ENCODE measurements at regions of chr5 and their contacts with region 1.

Region 1: DNA sequence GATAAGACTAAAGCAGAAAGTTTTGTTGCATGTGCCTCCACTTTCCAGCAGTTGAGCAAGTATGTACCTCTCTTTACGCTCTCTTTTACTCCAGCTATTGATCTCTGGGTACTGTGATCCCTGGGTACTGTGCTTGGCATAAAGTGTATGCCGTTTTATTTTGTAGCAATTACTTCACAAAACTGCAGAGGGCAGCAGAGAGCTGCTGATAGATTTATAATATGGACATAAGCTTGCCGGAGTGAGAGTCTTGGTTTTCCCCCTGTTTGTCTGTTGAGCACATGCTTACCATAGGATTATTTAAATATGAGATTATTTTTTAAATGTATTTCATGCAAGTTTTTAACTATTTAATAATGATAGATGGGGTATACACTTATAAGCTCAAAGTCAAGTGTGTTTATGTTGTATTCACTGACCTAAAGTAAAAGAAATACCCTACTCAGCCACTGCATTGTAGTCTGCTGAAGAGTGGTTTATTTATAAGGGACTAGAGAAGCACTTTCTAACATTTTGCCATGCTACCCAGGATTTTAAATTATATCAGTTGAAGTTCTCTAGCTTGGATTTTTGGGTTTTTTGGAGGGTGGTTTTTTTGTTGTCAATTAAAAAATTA is 13.0 kb downstream of the TTC1 start:
- DNase-seq: peak in 32 of 35 experiments; percentile 3 to 84 (median 38)
- ATAC-seq: peak; percentile 78 to 88 (median 83)
- H3K4me3 ChIP-seq: no peak overlapping the region
- H3K4me3 Mint-ChIP-seq: peak overlapping the region in 1 of 3 donors; percentile 44
- H3K27ac ChIP-seq: no peak overlapping the region
- H3K27ac Mint-ChIP-seq: peak overlapping the region; percentile 53 to 86
- H3K4me1 ChIP-seq: peaks cover 5 to 10% of the 10 kb centered on the region in 2 experiments
- H3K4me1 Mint-ChIP-seq: peaks cover 43 to 44% (median 43%) of the 10 kb centered on the region in 3 donors
- H3K27me3 ChIP-seq: no peaks in the 10 kb centered on the region
- H3K27me3 Mint-ChIP-seq: no peaks in the 10 kb centered on the region

Region 2: DNA sequence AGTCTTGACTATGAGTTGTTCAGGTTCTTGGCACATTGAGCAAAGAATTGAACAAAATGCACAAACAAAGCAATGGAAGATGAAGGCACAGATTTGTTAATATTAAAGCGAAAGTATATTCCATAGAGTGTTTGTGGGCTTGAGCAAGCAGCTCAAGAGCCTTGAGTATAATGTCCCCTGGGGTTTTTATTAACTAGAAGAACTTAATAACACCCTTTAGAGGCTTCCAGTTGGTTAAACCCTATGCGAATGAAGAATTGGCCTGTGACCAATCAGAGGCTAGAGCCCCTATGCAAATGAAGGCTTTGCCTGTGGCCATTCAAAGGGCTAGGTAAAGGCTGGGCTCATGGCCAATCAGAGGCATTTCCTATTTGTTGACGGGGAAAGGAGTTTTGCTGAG is 556.3 kb before region 1 on chr5:
- CTCF ChIA-PET with region 1: interaction called in 1 of 2 experiments, 10 read pairs
- POLR2A ChIA-PET with region 1: no interaction called
- DNase-seq: no peak
- ATAC-seq: no peak
- H3K4me3 ChIP-seq: no peak overlapping the region
- H3K4me3 Mint-ChIP-seq: no peak overlapping the region
- H3K27ac ChIP-seq: no peak overlapping the region
- H3K27ac Mint-ChIP-seq: no peak overlapping the region
- H3K4me1 ChIP-seq: peaks cover 10 to 13% of the 10 kb centered on the region in 2 experiments
- H3K4me1 Mint-ChIP-seq: peaks cover 21 to 25% (median 22%) of the 10 kb centered on the region in 3 donors
- H3K27me3 ChIP-seq: no peaks in the 10 kb centered on the region
- H3K27me3 Mint-ChIP-seq: peaks cover 0 to 4% of the 10 kb centered on the region in 2 donors

Region 3: DNA sequence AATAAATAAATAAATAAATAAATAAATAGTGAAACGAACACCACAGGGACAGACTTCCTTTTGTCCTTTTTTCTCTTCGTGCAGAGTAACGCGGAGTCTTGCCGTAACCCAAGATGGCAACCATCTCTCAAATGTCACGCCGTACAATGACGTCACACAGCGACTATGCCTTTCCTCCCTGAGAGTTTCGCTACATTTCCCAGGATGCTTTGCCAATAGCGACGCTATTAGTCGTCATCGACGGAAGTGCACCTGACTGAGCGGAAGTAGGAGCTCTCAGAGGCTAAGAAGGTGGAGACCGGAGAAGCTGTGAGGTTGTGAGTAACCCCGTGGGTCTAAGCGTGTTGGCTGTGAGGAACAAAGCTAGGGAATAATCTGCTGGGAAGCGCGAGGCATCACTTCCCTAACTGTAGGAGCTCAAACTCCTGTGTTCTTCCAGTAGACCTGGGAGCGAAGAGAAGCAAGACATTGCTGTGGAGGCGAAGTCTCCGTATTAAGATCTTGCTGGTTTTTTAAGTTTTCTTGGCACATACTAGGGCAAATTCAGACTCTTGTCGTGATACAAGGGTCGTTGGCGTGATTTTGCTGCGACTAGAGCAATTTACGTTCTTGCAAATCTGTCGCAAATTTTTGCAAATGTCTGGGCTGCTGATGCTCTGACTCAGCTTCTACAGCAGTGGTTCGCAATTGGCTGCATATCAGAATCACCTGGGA is 12.9 kb before region 1 on chr5 and contains the start of gene TTC1:
- CTCF ChIA-PET with region 1: interaction called, 7 to 38 read pairs
- POLR2A ChIA-PET with region 1: interaction called in 1 of 2 experiments, 5 read pairs
- DNase-seq: peak; percentile 80 to 100 (median 92)
- ATAC-seq: peak; percentile 97 to 99 (median 99)
- H3K4me3 ChIP-seq: peak within 1 kb of the TSS; percentile 73 to 99
- H3K4me3 Mint-ChIP-seq: peak within 1 kb of the TSS; percentile 96 to 100 (median 98)
- H3K27ac ChIP-seq: peak within 1 kb of the TSS; percentile 91
- H3K27ac Mint-ChIP-seq: peak within 1 kb of the TSS; percentile 91 to 98
- H3K4me1 ChIP-seq: peaks cover 2 to 16% of the 10 kb centered on the region in 2 experiments
- H3K4me1 Mint-ChIP-seq: peaks cover 29 to 34% (median 33%) of the 10 kb centered on the region in 3 donors
- H3K27me3 ChIP-seq: peaks cover 0 to 3% of the 10 kb centered on the region in 2 experiments
- H3K27me3 Mint-ChIP-seq: no peaks in the 10 kb centered on the region
- total RNA-seq, gene TTC1: 25.4 to 43.6 (median 37.3) TPM

Region 4: DNA sequence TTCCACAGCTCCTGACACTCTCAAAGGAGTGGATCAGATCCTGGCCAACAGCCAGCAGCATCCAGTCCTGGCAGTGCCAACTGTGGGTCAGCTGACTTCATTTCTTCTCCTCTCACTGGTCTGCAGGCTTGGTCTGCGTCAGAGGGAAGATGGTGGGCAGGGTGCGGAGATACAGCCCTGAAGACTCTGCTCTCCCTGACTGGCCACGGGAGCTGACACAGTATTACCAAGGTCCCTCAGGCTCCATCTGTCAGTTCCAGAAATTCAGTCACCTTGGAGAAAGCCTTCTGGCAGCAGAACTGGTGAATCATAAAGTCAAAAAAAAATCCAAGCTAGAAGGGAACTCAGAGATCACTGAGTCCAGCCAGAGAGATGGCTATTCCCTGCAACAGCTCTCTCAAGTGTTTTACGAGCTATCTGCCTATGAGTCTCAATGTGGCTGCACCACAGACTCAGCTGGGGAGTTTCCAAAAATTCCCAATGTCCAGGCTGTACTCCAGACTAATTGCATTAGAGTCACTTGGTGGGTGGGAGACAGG is 320.5 kb after region 1 on chr5:
- CTCF ChIA-PET with region 1: interaction called, 14 to 20 read pairs
- POLR2A ChIA-PET with region 1: no interaction called
- DNase-seq: no peak
- ATAC-seq: no peak
- H3K4me3 ChIP-seq: no peak overlapping the region
- H3K4me3 Mint-ChIP-seq: no peak overlapping the region
- H3K27ac ChIP-seq: no peak overlapping the region
- H3K27ac Mint-ChIP-seq: no peak overlapping the region
- H3K4me1 ChIP-seq: peaks cover 0 to 5% of the 10 kb centered on the region in 2 experiments
- H3K4me1 Mint-ChIP-seq: peaks cover 0 to 4% (median 2%) of the 10 kb centered on the region in 3 donors
- H3K27me3 ChIP-seq: peaks cover 0 to 15% of the 10 kb centered on the region in 2 experiments
- H3K27me3 Mint-ChIP-seq: no peaks in the 10 kb centered on the region

Region 5: DNA sequence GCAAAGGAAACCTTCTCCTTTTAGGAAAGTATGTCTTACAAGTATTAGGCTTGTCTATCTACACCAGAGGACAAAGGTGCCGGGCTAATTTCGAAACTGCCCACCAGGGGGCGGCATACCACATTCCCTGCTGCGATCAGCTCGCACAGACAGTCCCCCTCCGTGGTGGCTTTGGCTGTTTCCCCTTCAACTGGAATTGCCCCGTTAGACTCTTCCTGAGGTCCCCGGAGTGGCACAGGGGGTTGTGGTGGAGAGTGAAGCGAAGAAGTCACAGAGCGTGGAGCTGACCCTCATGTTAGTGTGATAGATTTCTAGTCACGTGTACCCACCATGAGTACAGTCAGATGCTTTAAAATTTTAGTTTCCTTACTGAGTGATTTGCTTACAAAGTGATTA is 417.3 kb after region 1 on chr5:
- CTCF ChIA-PET with region 1: interaction called, 11 read pairs
- POLR2A ChIA-PET with region 1: no interaction called
- DNase-seq: peak; percentile 60 to 94 (median 83)
- ATAC-seq: peak; percentile 81 to 88 (median 82)
- H3K4me3 ChIP-seq: peak overlapping the region; percentile 49 to 86
- H3K4me3 Mint-ChIP-seq: peak overlapping the region; percentile 82 to 89 (median 89)
- H3K27ac ChIP-seq: peak overlapping the region; percentile 48
- H3K27ac Mint-ChIP-seq: peak overlapping the region; percentile 91 to 92
- H3K4me1 ChIP-seq: peaks cover 2 to 4% of the 10 kb centered on the region in 2 experiments
- H3K4me1 Mint-ChIP-seq: peaks cover 7 to 20% (median 14%) of the 10 kb centered on the region in 3 donors
- H3K27me3 ChIP-seq: no peaks in the 10 kb centered on the region
- H3K27me3 Mint-ChIP-seq: peaks cover 6 to 10% of the 10 kb centered on the region in 2 donors